ENCODE measurements at regions of chr17 and their contacts with region 1.

Region 1: DNA sequence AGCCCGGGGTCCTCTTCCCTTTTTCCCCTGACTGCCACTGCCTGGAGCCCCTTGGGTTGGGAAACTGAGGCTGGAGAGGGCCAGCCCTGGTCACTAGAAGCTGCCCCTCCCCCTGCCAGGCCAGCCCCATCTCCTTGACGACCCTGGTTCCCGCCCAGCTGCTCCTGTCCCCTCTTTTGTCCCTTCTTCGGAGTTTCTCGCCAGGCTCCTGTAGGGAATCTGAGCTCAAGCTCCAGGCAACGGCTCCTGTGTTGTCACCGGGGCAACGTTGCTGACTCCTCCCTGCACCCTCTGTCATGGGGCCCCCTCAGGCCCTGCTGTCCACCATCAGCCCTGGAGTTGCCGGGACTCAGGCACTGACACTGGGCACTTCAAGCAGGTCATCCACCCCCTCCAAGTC is 5.7 kb downstream of the LLGL1 start:
- DNase-seq: no peak
- CTCF ChIP-seq: no peak

Region 2: GRCh38 chr17:18217412-18218015 is 13.7 kb before region 1 on chr17:
- CTCF ChIA-PET with region 1: interaction called, 14 read pairs
- POLR2A ChIA-PET with region 1: no interaction called
- DNase-seq: peak; percentile 90
- CTCF ChIP-seq: peak; percentile 94

Region 3: DNA sequence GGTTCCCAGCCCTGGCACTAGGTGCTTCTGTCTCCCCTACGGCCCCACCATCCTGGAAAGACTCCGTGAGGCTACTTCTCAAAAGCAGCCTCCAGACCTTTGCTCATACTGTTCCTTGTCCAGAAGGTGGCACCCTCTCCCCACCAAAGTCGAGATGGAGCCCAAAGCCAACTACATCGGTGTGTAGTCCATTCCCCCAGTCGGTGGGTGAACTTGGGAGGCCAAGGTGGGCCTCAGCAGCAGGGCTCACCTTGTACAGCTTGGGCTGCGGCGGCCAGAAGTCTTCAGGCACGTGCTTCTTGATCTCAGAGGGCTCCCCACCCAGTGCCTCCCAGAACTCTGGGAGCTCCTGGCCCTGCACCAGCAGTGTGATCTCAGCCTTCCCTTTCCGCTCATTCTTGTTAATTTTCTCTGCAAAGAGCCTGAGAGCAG is 17.2 kb after region 1 on chr17:
- CTCF ChIA-PET with region 1: interaction called, 13 read pairs
- POLR2A ChIA-PET with region 1: no interaction called
- DNase-seq: peak; percentile 89
- CTCF ChIP-seq: peak; percentile 77

Region 4: GRCh38 chr17:18368946-18369345 is 137.8 kb after region 1 on chr17:
- CTCF ChIA-PET with region 1: no interaction called
- POLR2A ChIA-PET with region 1: no interaction called
- DNase-seq: no peak
- CTCF ChIP-seq: no peak

Region 5: GRCh38 chr17:18981642-18982424 is 750.7 kb after region 1 on chr17:
- CTCF ChIA-PET with region 1: no interaction called
- POLR2A ChIA-PET with region 1: no interaction called
- DNase-seq: no peak
- CTCF ChIP-seq: no peak

Measured in GM10248 (cell line).